CD4-positive, alpha-beta T cell (primary cell): ENCODE measurements at regions of chr13 and their contacts with region 1.

Region 1: DNA sequence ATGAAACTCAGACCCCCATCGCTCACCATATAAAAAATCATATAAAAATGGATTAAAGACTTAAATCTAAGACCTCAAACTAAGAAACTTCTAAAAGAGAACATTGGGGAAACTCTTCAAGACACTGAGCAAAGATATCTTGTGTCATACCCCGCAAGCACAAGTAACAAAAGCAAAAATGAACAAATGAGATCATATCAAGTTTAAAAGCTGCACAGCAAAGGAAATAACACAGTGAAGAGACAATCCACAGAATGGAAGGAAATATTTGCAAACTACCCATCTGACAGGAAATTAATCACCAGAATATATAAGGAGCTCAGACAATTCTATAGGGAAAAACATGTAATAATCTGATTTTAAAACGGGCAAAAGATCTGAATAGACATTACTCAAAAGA is 808.3 kb downstream of the LIG4 start:
- DNase-seq: no peak
- ATAC-seq: no peak
- H3K4me3 ChIP-seq: no peak overlapping the region
- H3K4me3 Mint-ChIP-seq: no peak overlapping the region
- H3K27ac ChIP-seq: no peak overlapping the region
- H3K27ac Mint-ChIP-seq: no peak overlapping the region
- H3K4me1 ChIP-seq: no peaks in the 10 kb centered on the region
- H3K4me1 Mint-ChIP-seq: no peaks in the 10 kb centered on the region
- H3K27me3 ChIP-seq: no peaks in the 10 kb centered on the region
- H3K27me3 Mint-ChIP-seq: no peaks in the 10 kb centered on the region
- CTCF ChIP-seq: no peak

Region 2: DNA sequence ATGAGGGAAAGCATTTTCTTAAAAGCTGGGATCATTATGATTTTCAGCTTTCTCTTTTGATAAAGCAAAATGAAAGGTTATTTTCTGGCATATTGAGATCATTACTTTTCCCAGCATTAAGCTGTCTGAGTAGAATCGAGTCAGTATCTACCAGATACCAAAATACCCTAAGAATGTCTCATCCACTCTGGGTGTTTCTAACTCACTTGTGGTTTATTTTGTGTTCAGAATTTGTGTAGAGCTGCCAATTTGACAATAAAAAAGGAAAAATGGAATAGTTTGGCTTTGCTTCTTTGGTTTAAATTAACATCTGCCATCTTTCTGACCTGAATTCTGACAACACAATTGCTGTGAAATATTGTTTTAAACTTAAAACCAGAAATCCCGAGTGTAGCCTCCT is 400.4 kb before region 1 on chr13:
- CTCF ChIA-PET with region 1: no interaction called
- POLR2A ChIA-PET with region 1: no interaction called
- intact Hi-C with region 1: no loop called
- DNase-seq: no peak
- ATAC-seq: no peak
- H3K4me3 ChIP-seq: no peak overlapping the region
- H3K4me3 Mint-ChIP-seq: no peak overlapping the region
- H3K27ac ChIP-seq: no peak overlapping the region
- H3K27ac Mint-ChIP-seq: no peak overlapping the region
- H3K4me1 ChIP-seq: no peaks in the 10 kb centered on the region
- H3K4me1 Mint-ChIP-seq: no peaks in the 10 kb centered on the region
- H3K27me3 ChIP-seq: no peaks in the 10 kb centered on the region
- H3K27me3 Mint-ChIP-seq: no peaks in the 10 kb centered on the region
- CTCF ChIP-seq: no peak

Region 3: GRCh38 chr13:107347641-107348369 is 59.3 kb before region 1 on chr13:
- CTCF ChIA-PET with region 1: no interaction called
- POLR2A ChIA-PET with region 1: no interaction called
- intact Hi-C with region 1: loop called in 1 of 2 experiments (anchors 2 kb)
- DNase-seq: no peak
- ATAC-seq: no peak
- H3K4me3 ChIP-seq: no peak overlapping the region
- H3K4me3 Mint-ChIP-seq: no peak overlapping the region
- H3K27ac ChIP-seq: no peak overlapping the region
- H3K27ac Mint-ChIP-seq: no peak overlapping the region
- H3K4me1 ChIP-seq: no peaks in the 10 kb centered on the region
- H3K4me1 Mint-ChIP-seq: no peaks in the 10 kb centered on the region
- H3K27me3 ChIP-seq: no peaks in the 10 kb centered on the region
- H3K27me3 Mint-ChIP-seq: no peaks in the 10 kb centered on the region
- CTCF ChIP-seq: no peak

Region 4: DNA sequence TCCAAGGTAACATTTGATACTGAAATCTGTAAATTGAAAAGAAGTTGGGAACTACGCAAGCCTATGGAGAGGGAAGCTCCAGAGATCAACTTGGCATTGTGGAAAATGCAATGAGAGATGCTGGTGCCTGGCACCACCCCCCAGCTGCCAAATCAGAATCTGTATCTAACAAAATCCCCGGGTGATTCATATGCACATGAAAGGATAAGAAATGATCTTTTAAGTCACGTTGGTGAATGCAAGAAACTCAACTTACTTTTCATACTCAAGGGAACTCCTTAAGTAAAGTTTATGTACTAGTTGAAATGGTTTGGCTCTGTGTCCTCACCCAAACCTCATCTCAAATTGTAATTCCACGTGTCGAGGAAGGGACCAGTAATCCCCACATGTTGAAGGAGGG is 1063.8 kb after region 1 on chr13:
- CTCF ChIA-PET with region 1: no interaction called
- POLR2A ChIA-PET with region 1: no interaction called
- intact Hi-C with region 1: no loop called
- DNase-seq: no peak
- ATAC-seq: no peak
- H3K4me3 ChIP-seq: no peak overlapping the region
- H3K4me3 Mint-ChIP-seq: no peak overlapping the region
- H3K27ac ChIP-seq: no peak overlapping the region
- H3K27ac Mint-ChIP-seq: no peak overlapping the region
- H3K4me1 ChIP-seq: peaks cover 3% of the 10 kb centered on the region
- H3K4me1 Mint-ChIP-seq: peaks cover 4% of the 10 kb centered on the region
- H3K27me3 ChIP-seq: no peaks in the 10 kb centered on the region
- H3K27me3 Mint-ChIP-seq: peaks cover 10% of the 10 kb centered on the region
- CTCF ChIP-seq: no peak